OCI-LY7 (cell line): ENCODE measurements at regions of chrX and their contacts with region 1.

Region 1: DNA sequence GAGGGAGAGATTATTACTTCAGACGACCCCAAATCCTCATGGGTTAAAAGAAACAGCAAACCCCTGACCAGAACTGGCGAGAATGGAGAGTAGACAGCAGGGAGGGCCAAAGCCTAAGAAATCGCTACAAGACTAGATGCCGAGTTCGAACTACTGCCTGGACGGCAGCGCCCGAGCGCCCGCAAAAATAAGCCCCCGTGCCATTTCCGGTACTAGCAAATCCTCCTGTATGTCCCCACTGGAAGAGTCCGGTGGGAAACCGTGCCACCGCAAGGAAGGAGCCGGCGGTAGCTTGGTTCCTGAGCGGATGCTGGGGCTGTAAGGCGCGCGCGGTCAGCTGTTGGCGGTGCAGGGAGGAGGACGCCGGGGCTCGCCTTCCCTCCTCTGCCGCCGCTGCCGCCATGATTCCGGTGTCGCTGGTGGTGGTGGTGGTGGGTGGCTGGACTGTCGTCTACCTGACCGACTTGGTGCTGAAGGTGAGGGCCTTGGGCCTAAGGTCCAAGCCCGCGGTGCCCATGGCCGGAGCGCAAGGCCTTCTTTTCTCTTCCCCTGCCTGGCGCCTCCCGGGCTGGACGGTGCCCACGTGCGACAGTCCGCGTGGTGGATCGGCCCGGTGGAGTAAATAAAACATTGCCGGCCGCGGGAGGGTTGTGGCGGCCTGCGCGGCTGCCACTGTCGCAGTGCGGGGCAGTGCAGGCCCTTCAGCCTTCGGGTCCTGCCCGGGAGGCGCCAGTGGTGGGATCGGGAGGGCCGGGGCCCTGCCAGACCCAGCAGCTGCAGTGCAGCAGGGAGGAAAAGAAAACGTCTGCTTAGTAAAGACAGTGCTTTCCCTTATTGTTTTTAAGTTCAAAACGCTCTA is at the start of gene MBTPS2:
- DNase-seq: peak; percentile 87
- H3K4me3 ChIP-seq: peak within 1 kb of the TSS; percentile 85
- H3K27ac ChIP-seq: peak within 1 kb of the TSS; percentile 43
- H3K4me1 ChIP-seq: peaks cover 4% of the 10 kb centered on the region
- CTCF ChIP-seq: 0 out of 2 replicates have a peak, but pooled peaks have one; percentile 22
- total RNA-seq, gene MBTPS2: 3.1 and 4.7 TPM in 2 replicates

Region 2: GRCh38 chrX:21940356-21940829 is 100.8 kb after region 1 on chrX and contains the start of gene SMS:
- CTCF ChIA-PET with region 1: no interaction called
- POLR2A ChIA-PET with region 1: interaction called, 5 read pairs
- intact Hi-C with region 1: loop called (anchors 1 kb)
- DNase-seq: peak; percentile 61
- H3K4me3 ChIP-seq: peak within 1 kb of the TSS; percentile 71
- H3K27ac ChIP-seq: peak within 1 kb of the TSS; percentile 30
- H3K4me1 ChIP-seq: peaks cover 18% of the 10 kb centered on the region
- CTCF ChIP-seq: no peak
- total RNA-seq, gene SMS: 59.6 and 64.9 TPM in 2 replicates

Region 3: GRCh38 chrX:21985332-21985777 is 145.8 kb after region 1 on chrX:
- CTCF ChIA-PET with region 1: no interaction called
- POLR2A ChIA-PET with region 1: no interaction called
- intact Hi-C with region 1: loop called (anchors 1 kb)
- DNase-seq: peak; percentile 64
- H3K4me3 ChIP-seq: no peak overlapping the region
- H3K27ac ChIP-seq: no peak overlapping the region
- H3K4me1 ChIP-seq: no peaks in the 10 kb centered on the region
- CTCF ChIP-seq: peak; percentile 84